WTC11 (cell line): ENCODE measurements at regions of chr11 and their contacts with region 1.

Region 1: DNA sequence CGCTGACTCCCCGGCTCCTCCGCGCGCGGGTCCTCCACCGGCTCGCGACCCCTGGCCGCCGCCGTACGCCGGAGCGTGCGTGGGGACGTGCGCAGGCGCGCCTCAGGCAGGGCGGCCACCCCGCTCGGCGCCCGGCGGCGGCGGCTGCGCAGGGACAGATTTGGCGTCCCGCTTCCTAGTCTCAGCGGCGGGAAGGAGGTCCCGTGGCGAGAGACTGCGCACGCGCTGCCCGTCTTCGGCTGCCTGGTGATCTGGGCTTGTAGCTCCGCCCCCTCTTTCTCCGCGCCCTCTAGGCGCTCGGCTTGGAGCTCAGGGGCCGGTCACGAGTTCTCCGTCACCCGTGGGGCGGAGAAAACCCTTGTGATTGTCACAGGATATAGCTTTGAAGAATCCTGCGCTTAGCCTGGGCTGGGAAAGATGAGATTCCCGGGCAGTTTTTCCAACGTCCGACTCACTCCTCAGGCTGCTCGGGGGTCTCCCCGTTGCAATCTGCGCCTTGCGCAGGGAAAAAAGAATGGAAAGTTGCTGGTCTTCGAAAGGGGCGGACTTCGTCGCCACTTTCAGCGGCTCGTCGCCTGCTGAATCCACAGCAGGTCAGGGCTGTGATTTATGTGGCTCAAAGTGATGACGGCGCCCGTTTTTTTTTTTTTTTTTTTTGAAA is at the start of gene PATL1:
- DNase-seq: peak; percentile 96
- ATAC-seq: peak; percentile 89
- H3K4me3 Mint-ChIP-seq: peak within 1 kb of the TSS; percentile 92
- H3K27ac Mint-ChIP-seq: peak within 1 kb of the TSS; percentile 99
- H3K4me1 Mint-ChIP-seq: peaks cover 18% of the 10 kb centered on the region
- H3K27me3 Mint-ChIP-seq: no peaks in the 10 kb centered on the region; the same call in 1 of the 2 replicates
- CTCF ChIP-seq: no peak
- total RNA-seq, gene PATL1: 27.6 to 30.5 TPM (median 29.9 TPM) in 3 replicates

Region 2: DNA sequence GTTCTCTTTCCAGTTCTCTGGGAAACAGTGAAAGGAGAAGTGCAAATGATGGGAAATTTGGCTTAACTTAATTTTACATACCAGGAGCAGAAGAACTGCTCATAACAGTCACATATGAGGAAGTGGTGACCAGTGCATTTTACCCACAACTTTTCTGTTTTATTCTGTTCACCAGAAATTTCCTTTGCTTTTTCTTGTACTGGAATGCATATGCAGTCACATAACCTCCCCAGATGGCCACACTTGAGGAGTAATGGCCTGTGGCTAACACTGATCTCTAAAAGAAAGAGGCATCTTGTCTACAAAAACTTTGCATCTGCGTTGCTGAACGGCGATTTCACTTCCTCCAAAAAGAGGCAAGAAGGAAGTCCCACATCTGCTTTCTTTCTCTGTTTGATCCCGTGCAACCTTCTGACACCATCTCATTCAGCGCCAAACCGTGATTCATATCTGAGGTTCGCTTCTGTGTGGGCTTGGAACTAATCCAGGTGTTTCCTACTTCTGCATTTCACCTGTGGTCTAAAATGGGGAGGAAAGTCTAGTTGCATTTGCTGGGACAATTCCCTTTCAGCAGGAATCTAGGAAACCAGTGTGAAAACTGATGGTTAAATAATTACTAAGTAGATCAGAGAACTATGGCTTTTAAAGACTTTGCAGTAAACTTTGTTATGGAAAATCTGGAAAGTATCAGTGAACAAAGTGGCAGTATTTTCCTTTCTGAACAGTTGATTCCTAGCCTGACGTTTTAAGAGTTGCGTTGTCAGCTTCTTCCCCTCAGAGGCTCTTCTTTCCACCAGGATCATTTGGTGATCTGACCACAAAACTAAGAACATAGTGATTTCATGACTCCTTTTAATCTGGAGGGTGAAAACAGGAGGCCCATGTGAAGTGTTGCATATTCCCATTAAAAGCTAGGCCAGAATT is 452.2 kb before region 1 on chr11:
- CTCF ChIA-PET with region 1: no interaction called
- POLR2A ChIA-PET with region 1: no interaction called
- DNase-seq: no peak
- ATAC-seq: no peak
- H3K4me3 Mint-ChIP-seq: no peak overlapping the region
- H3K27ac Mint-ChIP-seq: no peak overlapping the region
- H3K4me1 Mint-ChIP-seq: no peaks in the 10 kb centered on the region
- H3K27me3 Mint-ChIP-seq: no peaks in the 10 kb centered on the region; the same call in 1 of the 2 replicates
- CTCF ChIP-seq: no peak

Region 3: DNA sequence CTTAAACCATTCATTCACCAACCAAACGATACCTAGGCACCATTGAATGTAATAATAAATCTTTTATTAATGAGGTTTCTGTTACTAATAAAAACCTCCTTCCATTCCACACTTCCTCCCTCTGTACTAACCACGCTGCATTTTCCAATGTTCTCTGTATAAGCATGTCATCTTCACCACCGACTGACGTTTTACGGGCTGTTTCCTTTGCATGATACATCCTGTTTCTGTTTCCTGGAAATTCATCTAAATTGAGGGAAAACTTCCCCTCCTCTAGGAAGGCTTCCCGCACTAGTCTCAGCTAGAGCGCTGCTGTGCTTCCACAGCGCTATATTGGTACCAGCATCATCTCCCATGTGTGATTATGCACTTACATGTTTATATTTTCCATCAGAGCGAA is 193.9 kb before region 1 on chr11:
- CTCF ChIA-PET with region 1: no interaction called
- POLR2A ChIA-PET with region 1: no interaction called
- DNase-seq: no peak
- ATAC-seq: no peak
- H3K4me3 Mint-ChIP-seq: no peak overlapping the region
- H3K27ac Mint-ChIP-seq: no peak overlapping the region
- H3K4me1 Mint-ChIP-seq: no peaks in the 10 kb centered on the region
- H3K27me3 Mint-ChIP-seq: no peaks in the 10 kb centered on the region; the same call in none of the 2 replicates
- CTCF ChIP-seq: no peak

Region 4: DNA sequence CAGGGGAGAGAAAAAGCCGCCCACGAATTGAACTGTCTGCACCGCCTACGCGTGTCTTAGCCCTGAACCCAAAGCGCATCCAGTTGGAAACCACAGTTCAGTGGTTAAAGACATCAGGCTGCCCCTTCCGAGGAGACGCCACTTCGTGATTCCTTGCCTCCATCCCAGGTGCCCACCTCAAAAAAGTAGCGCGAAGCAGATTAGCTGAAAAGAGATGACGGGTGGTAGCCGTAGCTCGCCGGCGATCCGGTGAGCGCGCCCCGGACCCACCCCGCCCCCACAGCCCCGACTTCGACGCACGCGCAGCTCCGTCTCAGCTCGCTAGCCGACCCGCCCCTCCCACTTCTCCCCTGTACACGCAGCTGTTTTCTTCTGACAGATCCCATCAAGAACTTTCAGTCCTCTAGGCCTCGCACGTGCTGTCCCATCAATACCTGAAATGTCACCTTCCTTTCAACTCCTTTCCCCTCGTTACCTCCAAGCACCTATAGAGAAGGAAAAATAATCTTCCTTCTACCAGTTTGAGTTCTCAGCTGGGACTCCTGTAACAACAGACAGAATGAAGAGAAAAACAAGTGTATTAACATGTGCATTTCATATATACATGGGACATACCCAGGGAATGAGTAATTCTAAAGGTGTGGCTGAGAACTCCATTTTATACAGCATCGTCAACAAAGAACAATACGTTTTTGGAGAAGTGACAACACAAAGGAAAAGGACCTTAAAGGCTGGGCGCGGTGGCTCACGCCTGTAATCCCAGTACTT is 108.2 kb before region 1 on chr11:
- CTCF ChIA-PET with region 1: interaction called, 4 read pairs
- POLR2A ChIA-PET with region 1: interaction called, 13 read pairs
- DNase-seq: peak; percentile 83
- ATAC-seq: peak; percentile 6
- H3K4me3 Mint-ChIP-seq: peak overlapping the region; percentile 87
- H3K27ac Mint-ChIP-seq: peak overlapping the region; percentile 84
- H3K4me1 Mint-ChIP-seq: peaks cover 11% of the 10 kb centered on the region
- H3K27me3 Mint-ChIP-seq: peaks cover 7% of the 10 kb centered on the region
- CTCF ChIP-seq: no peak

Region 5: GRCh38 chr11:59728913-59729312 is 59.8 kb after region 1 on chr11:
- CTCF ChIA-PET with region 1: no interaction called
- POLR2A ChIA-PET with region 1: no interaction called
- DNase-seq: no peak
- ATAC-seq: no peak
- H3K4me3 Mint-ChIP-seq: no peak overlapping the region
- H3K27ac Mint-ChIP-seq: no peak overlapping the region
- H3K4me1 Mint-ChIP-seq: no peaks in the 10 kb centered on the region
- H3K27me3 Mint-ChIP-seq: peaks cover 5% of the 10 kb centered on the region; the same call in 1 of the 2 replicates
- CTCF ChIP-seq: no peak

Region 6: GRCh38 chr11:59822989-59823566 is 154.0 kb after region 1 on chr11:
- CTCF ChIA-PET with region 1: no interaction called
- POLR2A ChIA-PET with region 1: no interaction called
- DNase-seq: peak; percentile 16
- ATAC-seq: peak; percentile 59; the same call in 1 of the 2 replicates
- H3K4me3 Mint-ChIP-seq: no peak overlapping the region
- H3K27ac Mint-ChIP-seq: no peak overlapping the region; the same call in 1 of the 2 replicates
- H3K4me1 Mint-ChIP-seq: peaks cover 19% of the 10 kb centered on the region
- H3K27me3 Mint-ChIP-seq: no peaks in the 10 kb centered on the region
- CTCF ChIP-seq: peak; percentile 40; the same call in 1 of the 2 replicates